ENCODE measurements at regions of chr6 and their contacts with region 1.

Region 1: GRCh38 chr6:24899997-24900325 is 35.8 kb downstream of the RIPOR2 start:
- DNase-seq: peak in 29 of 35 experiments; percentile 9 to 63 (median 37)
- ATAC-seq: peak; percentile 26 to 79 (median 35)
- H3K4me3 ChIP-seq: peak overlapping the region in 1 of 2 donors; percentile 34
- H3K4me3 Mint-ChIP-seq: peak overlapping the region; percentile 43 to 54 (median 54)
- H3K27ac ChIP-seq: peak overlapping the region; percentile 60
- H3K27ac Mint-ChIP-seq: peak overlapping the region; percentile 91 to 92
- H3K4me1 ChIP-seq: peaks cover 41 to 73% of the 10 kb centered on the region in 2 experiments
- H3K4me1 Mint-ChIP-seq: peaks cover 88 to 95% (median 94%) of the 10 kb centered on the region in 3 donors
- H3K27me3 ChIP-seq: no peaks in the 10 kb centered on the region
- H3K27me3 Mint-ChIP-seq: no peaks in the 10 kb centered on the region

Region 2: GRCh38 chr6:24910961-24911712 is 11.2 kb after region 1 on chr6:
- CTCF ChIA-PET with region 1: interaction called in 1 of 2 experiments, 11 read pairs
- POLR2A ChIA-PET with region 1: interaction called, 5 to 6 read pairs
- DNase-seq: peak in 30 of 35 experiments; percentile 29 to 72 (median 48)
- ATAC-seq: peak; percentile 32 to 50 (median 36)
- H3K4me3 ChIP-seq: peak overlapping the region; percentile 57 to 60
- H3K4me3 Mint-ChIP-seq: peak overlapping the region; percentile 88 to 93 (median 90)
- H3K27ac ChIP-seq: peak overlapping the region; percentile 79
- H3K27ac Mint-ChIP-seq: peak overlapping the region; percentile 98 to 99
- H3K4me1 ChIP-seq: peaks cover 74 to 87% of the 10 kb centered on the region in 2 experiments
- H3K4me1 Mint-ChIP-seq: peaks cover 96 to 100% (median 97%) of the 10 kb centered on the region in 3 donors
- H3K27me3 ChIP-seq: no peaks in the 10 kb centered on the region
- H3K27me3 Mint-ChIP-seq: no peaks in the 10 kb centered on the region

Measured in T-cell (primary cell).